Prostate gland (tissue), 2 donors: ENCODE measurements at regions of chr19 and their contacts with region 1.

Region 1: GRCh38 chr19:49097455-49098288 is 12.4 kb downstream of the SNRNP70 start:
- DNase-seq: peak; percentile 84
- H3K4me3 ChIP-seq: no peak overlapping the region
- H3K27ac ChIP-seq: peak overlapping the region; percentile 67 to 72
- H3K4me1 ChIP-seq: peaks cover 16% of the 10 kb centered on the region
- H3K27me3 ChIP-seq: no peaks in the 10 kb centered on the region
- CTCF ChIP-seq: peak; percentile 97 to 99 (median 98)
- POLR2A ChIP-seq: no peak

Region 2: DNA sequence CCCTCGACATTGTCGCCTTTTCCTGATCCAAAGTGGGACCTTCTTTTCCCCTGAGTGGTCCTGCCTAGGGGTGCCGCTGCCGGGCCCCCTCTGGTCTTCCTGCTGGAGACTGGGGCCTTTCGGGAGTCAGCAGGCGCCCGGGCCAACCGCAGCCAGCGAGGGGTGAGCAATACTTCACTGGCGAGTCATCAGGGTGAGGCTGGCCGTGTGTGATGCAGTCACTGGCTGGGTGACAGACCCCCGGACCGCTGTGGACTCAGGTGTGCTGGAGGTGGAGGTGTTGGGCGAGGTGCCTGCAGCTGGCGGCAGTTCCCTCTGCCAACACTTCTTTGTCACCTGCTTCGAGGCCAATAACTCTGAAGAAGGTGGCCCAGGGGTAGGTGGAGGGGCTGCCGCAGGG is 55.5 kb before region 1 on chr19:
- intact Hi-C with region 1: no loop called
- DNase-seq: no peak
- H3K4me3 ChIP-seq: no peak overlapping the region
- H3K27ac ChIP-seq: no peak overlapping the region
- H3K4me1 ChIP-seq: no peaks in the 10 kb centered on the region
- H3K27me3 ChIP-seq: no peaks in the 10 kb centered on the region
- CTCF ChIP-seq: no peak
- POLR2A ChIP-seq: no peak

Region 3: DNA sequence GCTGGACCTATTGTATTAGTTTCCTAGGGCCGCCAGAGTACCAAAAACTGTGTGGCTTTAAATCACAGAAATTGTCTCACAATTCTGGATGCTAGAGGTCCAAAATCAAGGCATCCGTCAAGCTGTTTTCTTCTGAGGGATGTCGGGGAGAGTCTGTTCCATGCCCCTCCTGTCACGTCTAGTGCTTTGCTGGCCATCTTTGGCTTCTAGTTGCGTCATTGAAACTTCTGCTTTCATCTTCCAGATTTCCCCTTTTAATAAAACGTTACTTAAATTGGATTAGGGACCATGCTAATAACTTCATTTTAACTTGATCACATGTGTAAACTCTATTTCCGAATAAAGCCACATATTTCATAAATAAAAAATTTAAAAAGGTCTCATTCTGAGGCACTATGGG is 107.4 kb after region 1 on chr19:
- intact Hi-C with region 1: loop called (anchors 5 kb)
- DNase-seq: no peak
- H3K4me3 ChIP-seq: no peak overlapping the region
- H3K27ac ChIP-seq: no peak overlapping the region
- H3K4me1 ChIP-seq: no peaks in the 10 kb centered on the region
- H3K27me3 ChIP-seq: no peaks in the 10 kb centered on the region
- CTCF ChIP-seq: no peak
- POLR2A ChIP-seq: no peak